ENCODE measurements at regions of chr17 and their contacts with region 1.

Region 1: DNA sequence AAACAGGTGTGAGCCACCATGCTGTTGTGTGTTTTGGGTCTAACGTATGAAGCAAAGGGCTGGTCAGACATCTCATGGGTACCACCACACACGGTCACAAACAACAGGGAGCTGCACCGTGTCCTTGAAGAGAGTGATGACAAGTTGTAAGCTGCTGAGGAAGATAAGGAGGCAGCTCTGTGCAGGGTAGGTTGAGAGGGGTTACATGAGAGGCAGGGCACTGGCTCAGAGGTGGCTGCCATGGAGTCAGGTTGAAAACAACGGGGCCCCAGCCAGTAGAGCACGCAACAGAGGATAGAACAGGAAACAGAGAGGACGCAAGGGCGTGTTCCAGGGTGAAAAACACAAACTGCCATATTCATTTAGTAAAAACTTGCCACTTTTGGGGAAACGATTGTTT is 52.2 kb downstream of the TRARG1 start:
- DNase-seq: peak in 1 of 2 experiments; percentile 18
- H3K4me3 ChIP-seq: no peak overlapping the region
- H3K4me3 Mint-ChIP-seq: no peak overlapping the region
- H3K27ac Mint-ChIP-seq: no peak overlapping the region
- H3K4me1 ChIP-seq: no peaks in the 10 kb centered on the region
- H3K4me1 Mint-ChIP-seq: no peaks in the 10 kb centered on the region
- H3K27me3 ChIP-seq: no peaks in the 10 kb centered on the region
- H3K27me3 Mint-ChIP-seq: no peaks in the 10 kb centered on the region
- CTCF ChIP-seq: no peak

Region 2: DNA sequence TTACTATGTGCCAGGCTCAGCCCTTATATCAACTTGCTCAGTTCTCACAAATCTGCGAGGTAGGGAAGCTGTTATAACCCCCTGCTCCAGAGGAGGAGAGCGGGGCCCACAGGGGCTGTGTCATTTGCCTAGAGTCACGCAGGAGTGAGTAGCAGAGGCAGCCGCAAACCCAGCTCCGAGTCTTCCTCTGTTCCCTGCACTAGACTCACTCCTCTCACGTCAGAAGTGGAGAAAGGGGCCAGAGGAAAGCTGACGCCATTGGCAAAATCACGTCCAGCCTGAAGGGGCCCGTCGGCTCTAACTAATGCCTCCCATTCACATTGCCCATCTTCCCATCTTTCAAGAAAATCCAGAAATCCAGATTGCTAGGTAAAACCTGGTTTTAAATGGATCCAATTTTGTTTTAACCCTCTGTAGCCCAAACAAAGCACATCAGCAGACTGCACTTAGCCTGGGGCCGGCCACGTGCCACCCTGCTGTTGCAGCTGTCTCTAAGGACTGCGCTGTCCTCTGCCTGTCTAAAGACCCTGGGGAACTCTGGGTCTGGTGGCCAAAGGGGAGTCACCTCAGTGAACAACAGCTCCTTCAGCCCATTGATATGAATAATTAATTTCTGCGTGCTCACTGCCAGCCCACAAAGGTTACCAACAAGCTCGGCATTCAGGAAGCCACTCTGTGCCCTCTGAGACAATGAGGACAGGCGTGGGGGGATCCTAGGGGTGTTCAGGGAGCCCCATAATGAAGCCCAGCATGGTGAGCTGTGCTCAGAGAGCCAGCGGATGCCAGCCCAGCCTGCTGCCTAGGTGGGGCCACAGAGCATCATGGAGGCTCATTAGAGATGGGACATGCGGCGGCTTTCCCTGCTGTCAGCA is 115.3 kb before region 1 on chr17:
- CTCF ChIA-PET with region 1: no interaction called
- POLR2A ChIA-PET with region 1: no interaction called
- intact Hi-C with region 1: no loop called
- DNase-seq: no peak
- H3K4me3 ChIP-seq: no peak overlapping the region
- H3K4me3 Mint-ChIP-seq: no peak overlapping the region
- H3K27ac Mint-ChIP-seq: peak overlapping the region; percentile 5
- H3K4me1 ChIP-seq: peaks cover 23% of the 10 kb centered on the region
- H3K4me1 Mint-ChIP-seq: peaks cover under 1% of the 10 kb centered on the region
- H3K27me3 ChIP-seq: no peaks in the 10 kb centered on the region
- H3K27me3 Mint-ChIP-seq: no peaks in the 10 kb centered on the region
- CTCF ChIP-seq: no peak

Region 3: GRCh38 chr17:1260086-1260769 is 71.5 kb before region 1 on chr17:
- CTCF ChIA-PET with region 1: interaction called, 14 read pairs
- POLR2A ChIA-PET with region 1: no interaction called
- intact Hi-C with region 1: loop called (anchors 1 kb)
- DNase-seq: no peak
- H3K4me3 ChIP-seq: peak overlapping the region; percentile 54
- H3K4me3 Mint-ChIP-seq: peak overlapping the region; percentile 89
- H3K27ac Mint-ChIP-seq: no peak overlapping the region
- H3K4me1 ChIP-seq: no peaks in the 10 kb centered on the region
- H3K4me1 Mint-ChIP-seq: no peaks in the 10 kb centered on the region
- H3K27me3 ChIP-seq: no peaks in the 10 kb centered on the region
- H3K27me3 Mint-ChIP-seq: no peaks in the 10 kb centered on the region
- CTCF ChIP-seq: no peak

Region 4: DNA sequence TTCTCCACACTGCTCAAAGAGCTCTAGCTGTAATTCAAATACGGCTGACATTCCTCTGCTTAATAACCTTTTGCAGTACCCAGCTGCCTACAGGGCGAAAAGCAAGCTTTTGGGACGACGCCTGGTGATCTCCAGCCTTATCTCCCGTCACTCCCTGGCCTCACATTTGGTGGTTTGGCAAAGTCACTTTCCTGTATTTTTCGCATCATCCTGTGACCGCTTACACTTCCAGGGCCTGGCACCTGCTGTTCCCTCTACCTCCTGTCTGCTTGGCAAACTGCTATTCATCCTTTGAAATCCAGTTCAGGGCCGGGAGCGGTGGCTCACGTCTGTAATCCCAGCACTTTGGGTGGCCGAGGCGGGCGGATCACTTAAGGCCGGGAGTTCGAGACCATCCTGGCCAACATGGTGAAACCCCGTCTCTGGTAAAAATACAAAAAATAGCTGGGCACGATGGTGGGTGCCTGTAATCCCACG is 64.2 kb before region 1 on chr17:
- CTCF ChIA-PET with region 1: interaction called, 4 read pairs
- POLR2A ChIA-PET with region 1: no interaction called
- intact Hi-C with region 1: loop called (anchors 2 kb)
- DNase-seq: no peak
- H3K4me3 ChIP-seq: peak overlapping the region; percentile 60
- H3K4me3 Mint-ChIP-seq: peak overlapping the region; percentile 95
- H3K27ac Mint-ChIP-seq: peak overlapping the region; percentile 97
- H3K4me1 ChIP-seq: peaks cover 4% of the 10 kb centered on the region
- H3K4me1 Mint-ChIP-seq: no peaks in the 10 kb centered on the region
- H3K27me3 ChIP-seq: no peaks in the 10 kb centered on the region
- H3K27me3 Mint-ChIP-seq: no peaks in the 10 kb centered on the region
- CTCF ChIP-seq: no peak

Region 5: GRCh38 chr17:1275962-1276736 is 55.6 kb before region 1 on chr17:
- CTCF ChIA-PET with region 1: interaction called, 3 read pairs
- POLR2A ChIA-PET with region 1: no interaction called
- intact Hi-C with region 1: loop called (anchors 1 kb)
- DNase-seq: peak; percentile 70 to 80
- H3K4me3 ChIP-seq: no peak overlapping the region
- H3K4me3 Mint-ChIP-seq: no peak overlapping the region
- H3K27ac Mint-ChIP-seq: no peak overlapping the region
- H3K4me1 ChIP-seq: no peaks in the 10 kb centered on the region
- H3K4me1 Mint-ChIP-seq: no peaks in the 10 kb centered on the region
- H3K27me3 ChIP-seq: no peaks in the 10 kb centered on the region
- H3K27me3 Mint-ChIP-seq: no peaks in the 10 kb centered on the region
- CTCF ChIP-seq: peak; percentile 87 to 91

Region 6: DNA sequence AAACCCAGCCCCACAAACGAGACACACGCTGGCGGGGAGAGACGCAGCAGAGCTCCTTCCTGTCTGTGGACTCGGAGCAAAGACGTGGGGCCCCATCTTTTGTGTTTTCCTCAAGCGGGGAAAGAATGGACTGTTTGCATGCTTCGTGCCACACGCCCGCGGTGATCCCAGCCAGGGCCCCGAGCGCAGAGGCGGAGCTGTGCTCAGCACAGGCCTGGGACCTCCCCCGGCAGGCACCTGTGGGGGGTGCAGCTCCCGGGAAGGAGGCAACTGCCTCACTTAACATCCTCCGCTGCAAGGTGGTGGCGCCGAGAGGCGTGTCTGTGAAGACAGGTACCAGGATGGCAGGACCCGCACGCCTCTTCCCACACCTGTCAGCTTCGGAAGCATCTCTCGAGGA is 33.1 kb before region 1 on chr17:
- CTCF ChIA-PET with region 1: interaction called, 3 read pairs
- POLR2A ChIA-PET with region 1: no interaction called
- intact Hi-C with region 1: loop called (anchors 5 kb)
- DNase-seq: peak in 1 of 2 experiments; percentile 51
- H3K4me3 ChIP-seq: 0 out of 2 replicates have a peak overlapping the region, but pooled peaks have one; percentile 13
- H3K4me3 Mint-ChIP-seq: peak overlapping the region; percentile 25
- H3K27ac Mint-ChIP-seq: no peak overlapping the region
- H3K4me1 ChIP-seq: peaks cover 7% of the 10 kb centered on the region; the same call in 1 of the 2 replicates
- H3K4me1 Mint-ChIP-seq: no peaks in the 10 kb centered on the region
- H3K27me3 ChIP-seq: no peaks in the 10 kb centered on the region
- H3K27me3 Mint-ChIP-seq: no peaks in the 10 kb centered on the region
- CTCF ChIP-seq: no peak